ENCODE measurements at regions of chr6 and their contacts with region 1.

Region 1: GRCh38 chr6:118565311-118565960 is 17.3 kb downstream of the PLN start:
- DNase-seq: peak; percentile 49 to 71 (median 58)
- H3K4me3 ChIP-seq: no peak overlapping the region
- H3K4me3 Mint-ChIP-seq: peak overlapping the region in 1 of 8 donors; percentile 58
- H3K27ac ChIP-seq: no peak overlapping the region
- H3K27ac Mint-ChIP-seq: peak overlapping the region; percentile 7 to 86 (median 64)
- H3K4me1 ChIP-seq: peaks cover 12% of the 10 kb centered on the region
- H3K4me1 Mint-ChIP-seq: peaks cover 20 to 46% (median 27%) of the 10 kb centered on the region in 4 donors
- H3K27me3 ChIP-seq: no peaks in the 10 kb centered on the region
- H3K27me3 Mint-ChIP-seq: no peaks in the 10 kb centered on the region

Region 2: GRCh38 chr6:118283766-118284165 is 281.7 kb before region 1 on chr6:
- CTCF ChIA-PET with region 1: interaction called, 6 read pairs
- POLR2A ChIA-PET with region 1: no interaction called
- intact Hi-C with region 1: loop called (anchors 5 kb)
- DNase-seq: peak; percentile 48 to 60 (median 56)
- H3K4me3 ChIP-seq: no peak overlapping the region
- H3K4me3 Mint-ChIP-seq: no peak overlapping the region
- H3K27ac ChIP-seq: no peak overlapping the region
- H3K27ac Mint-ChIP-seq: no peak overlapping the region
- H3K4me1 ChIP-seq: peaks cover 3% of the 10 kb centered on the region
- H3K4me1 Mint-ChIP-seq: peaks cover 0 to 1% (median 0%) of the 10 kb centered on the region in 4 donors
- H3K27me3 ChIP-seq: no peaks in the 10 kb centered on the region
- H3K27me3 Mint-ChIP-seq: peaks cover 5 to 7% of the 10 kb centered on the region in 2 donors

Region 3: DNA sequence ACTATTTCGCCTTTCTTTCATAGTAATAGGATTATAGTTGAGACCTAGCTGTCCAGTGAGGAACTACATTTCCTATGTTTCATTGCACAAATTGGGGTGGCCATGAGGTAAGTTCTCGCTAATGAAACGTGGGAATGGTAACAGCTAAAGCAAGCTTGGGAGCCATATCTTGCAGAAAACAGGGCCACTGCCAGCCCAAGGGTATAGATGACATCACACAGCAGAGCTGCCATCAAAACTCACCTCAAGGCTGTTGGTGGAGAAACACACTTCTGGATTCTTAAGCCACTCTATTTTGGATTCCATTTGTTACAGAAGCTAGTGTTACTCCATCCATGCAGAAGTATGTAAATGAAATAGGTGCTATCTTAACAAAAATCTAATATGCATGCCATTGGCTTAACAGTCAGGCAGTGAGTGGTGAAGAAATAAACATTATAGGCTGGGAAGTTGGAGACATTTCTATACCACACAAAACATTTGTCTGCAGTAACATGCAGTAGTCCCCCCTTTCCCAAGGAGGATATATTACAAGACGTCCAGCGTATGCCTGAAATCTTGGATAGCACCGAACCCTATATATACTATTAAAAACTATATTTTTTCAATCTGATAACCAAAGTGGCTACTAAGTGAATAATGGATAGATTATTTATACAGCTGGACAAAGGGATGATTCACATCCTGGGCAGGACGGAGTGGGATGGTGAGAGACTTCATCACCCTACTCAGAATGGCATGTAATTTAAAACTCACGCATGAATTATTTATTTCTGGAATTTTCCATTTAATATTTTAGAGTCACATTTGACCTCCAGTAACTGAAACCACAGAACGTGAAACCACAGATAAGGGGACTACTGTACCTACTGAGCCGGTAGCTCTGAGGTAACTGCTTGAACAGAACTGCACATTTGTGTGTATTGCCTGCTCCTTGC is 177.4 kb before region 1 on chr6:
- CTCF ChIA-PET with region 1: no interaction called
- POLR2A ChIA-PET with region 1: no interaction called
- intact Hi-C with region 1: no loop called
- DNase-seq: no peak
- H3K4me3 ChIP-seq: no peak overlapping the region
- H3K4me3 Mint-ChIP-seq: no peak overlapping the region
- H3K27ac ChIP-seq: no peak overlapping the region
- H3K27ac Mint-ChIP-seq: no peak overlapping the region
- H3K4me1 ChIP-seq: no peaks in the 10 kb centered on the region
- H3K4me1 Mint-ChIP-seq: peaks cover 0 to 2% (median 0%) of the 10 kb centered on the region in 4 donors
- H3K27me3 ChIP-seq: no peaks in the 10 kb centered on the region
- H3K27me3 Mint-ChIP-seq: no peaks in the 10 kb centered on the region

Region 4: GRCh38 chr6:118495485-118496280 is 69.8 kb before region 1 on chr6:
- CTCF ChIA-PET with region 1: no interaction called
- POLR2A ChIA-PET with region 1: no interaction called
- intact Hi-C with region 1: no loop called
- DNase-seq: no peak
- H3K4me3 ChIP-seq: no peak overlapping the region
- H3K4me3 Mint-ChIP-seq: no peak overlapping the region
- H3K27ac ChIP-seq: no peak overlapping the region
- H3K27ac Mint-ChIP-seq: no peak overlapping the region
- H3K4me1 ChIP-seq: no peaks in the 10 kb centered on the region
- H3K4me1 Mint-ChIP-seq: peaks cover 8 to 14% (median 11%) of the 10 kb centered on the region in 4 donors
- H3K27me3 ChIP-seq: no peaks in the 10 kb centered on the region
- H3K27me3 Mint-ChIP-seq: no peaks in the 10 kb centered on the region

Region 5: DNA sequence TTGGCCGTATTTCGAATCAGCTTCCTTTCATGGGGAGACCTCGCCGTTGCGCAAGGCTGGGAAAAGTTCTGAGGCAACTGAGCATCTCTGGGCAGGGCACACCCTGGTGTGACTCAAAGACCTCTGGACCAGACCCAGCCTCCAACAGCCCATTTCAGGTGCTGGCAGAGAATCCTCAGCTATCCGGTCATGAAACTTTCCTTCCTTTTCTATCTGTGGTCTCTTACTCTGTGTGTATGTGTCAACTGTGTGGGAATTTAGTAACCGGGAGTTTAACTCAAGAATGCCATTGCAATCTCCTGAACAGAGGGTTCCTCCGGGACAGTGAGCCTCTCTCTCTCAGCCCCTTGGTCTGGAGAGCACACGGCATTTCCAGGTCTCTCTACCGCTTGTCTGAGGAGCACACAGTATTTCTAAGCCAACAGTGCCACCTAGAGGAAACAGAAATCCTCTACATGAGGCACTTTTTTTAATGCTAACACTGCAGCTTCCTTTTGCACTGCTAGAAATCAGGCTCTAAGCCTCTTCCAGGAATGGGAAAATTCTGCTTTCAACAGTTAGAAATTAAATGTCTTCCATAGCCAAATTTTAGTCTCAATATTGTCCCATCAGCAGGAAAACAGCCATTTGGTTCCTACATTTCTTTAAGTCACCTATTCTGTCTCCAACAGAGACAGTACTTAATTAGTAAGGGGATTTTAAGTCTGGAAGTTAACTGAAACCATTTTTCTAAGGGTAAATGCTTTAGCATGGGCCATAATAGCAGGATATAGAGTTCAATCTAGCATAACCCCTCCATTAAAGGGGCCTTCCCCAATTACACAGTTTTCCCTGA is 15.4 kb after region 1 on chr6:
- CTCF ChIA-PET with region 1: interaction called, 28 read pairs
- POLR2A ChIA-PET with region 1: interaction called, 4 read pairs
- intact Hi-C with region 1: no loop called
- DNase-seq: peak in 4 of 5 donors; percentile 18 to 43 (median 40)
- H3K4me3 ChIP-seq: no peak overlapping the region
- H3K4me3 Mint-ChIP-seq: peak overlapping the region in 1 of 8 donors; percentile 21
- H3K27ac ChIP-seq: no peak overlapping the region
- H3K27ac Mint-ChIP-seq: peak overlapping the region; percentile 30 to 91 (median 76)
- H3K4me1 ChIP-seq: no peaks in the 10 kb centered on the region
- H3K4me1 Mint-ChIP-seq: peaks cover 7 to 20% (median 12%) of the 10 kb centered on the region in 4 donors
- H3K27me3 ChIP-seq: no peaks in the 10 kb centered on the region
- H3K27me3 Mint-ChIP-seq: no peaks in the 10 kb centered on the region

Region 6: GRCh38 chr6:118724211-118724610 is 158.8 kb after region 1 on chr6:
- CTCF ChIA-PET with region 1: interaction called, 7 read pairs
- POLR2A ChIA-PET with region 1: interaction called, 3 read pairs
- intact Hi-C with region 1: loop called (anchors 1 kb)
- DNase-seq: no peak
- H3K4me3 ChIP-seq: no peak overlapping the region
- H3K4me3 Mint-ChIP-seq: peak overlapping the region in 5 of 8 donors; percentile 7 to 71 (median 59)
- H3K27ac ChIP-seq: no peak overlapping the region
- H3K27ac Mint-ChIP-seq: peak overlapping the region in 4 of 7 donors; percentile 23 to 87 (median 58)
- H3K4me1 ChIP-seq: peaks cover 48% of the 10 kb centered on the region
- H3K4me1 Mint-ChIP-seq: peaks cover 30 to 79% (median 46%) of the 10 kb centered on the region in 4 donors
- H3K27me3 ChIP-seq: no peaks in the 10 kb centered on the region
- H3K27me3 Mint-ChIP-seq: no peaks in the 10 kb centered on the region

Region 7: DNA sequence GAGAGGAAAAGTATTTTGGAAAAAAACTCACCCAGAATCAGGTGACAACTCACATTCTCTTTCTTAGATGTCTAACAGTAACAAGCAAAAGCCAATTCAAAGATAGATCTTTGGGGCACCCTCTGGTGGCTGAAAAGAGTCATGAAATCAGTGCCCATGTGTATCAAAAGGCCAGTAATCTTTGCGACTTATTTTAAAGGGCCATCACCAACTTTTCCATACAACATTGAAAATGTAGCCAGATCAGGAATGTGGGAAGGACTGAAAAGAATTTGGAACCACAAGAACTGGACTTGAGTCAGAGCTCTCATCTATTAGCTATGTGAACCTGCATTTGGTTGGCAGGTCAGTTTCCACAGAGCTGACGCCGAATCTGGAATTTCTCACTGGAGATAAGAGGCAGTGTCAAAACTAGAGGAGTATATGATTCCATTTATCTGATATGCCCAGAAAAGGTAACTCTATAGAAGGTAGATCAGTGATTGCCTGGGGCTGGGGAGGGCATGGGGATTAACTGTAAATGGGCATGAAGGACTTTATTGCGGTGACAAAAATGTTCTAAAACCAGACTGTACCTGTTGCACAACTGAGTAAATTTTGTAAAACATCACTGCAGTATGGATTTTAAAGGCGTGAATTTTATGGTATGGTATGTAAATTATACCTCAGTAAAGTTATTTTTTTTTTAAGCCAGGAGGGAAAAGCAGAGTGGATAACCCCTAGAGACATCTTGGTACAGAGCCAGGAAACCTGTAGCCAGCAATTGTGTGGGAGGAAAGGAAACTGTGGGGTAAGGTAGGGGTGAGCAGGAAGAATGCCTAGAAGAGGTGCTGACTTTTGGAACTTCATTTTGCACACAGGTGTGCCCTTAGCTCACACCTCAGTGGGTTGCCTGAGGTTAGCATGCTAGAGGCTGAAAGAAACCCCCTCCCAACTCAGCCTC is 211.4 kb after region 1 on chr6:
- CTCF ChIA-PET with region 1: interaction called, 50 read pairs
- POLR2A ChIA-PET with region 1: interaction called, 3 read pairs
- intact Hi-C with region 1: loop called (anchors 1 kb)
- DNase-seq: peak; percentile 63 to 73 (median 71)
- H3K4me3 ChIP-seq: no peak overlapping the region
- H3K4me3 Mint-ChIP-seq: peak overlapping the region in 6 of 8 donors; percentile 2 to 71 (median 50)
- H3K27ac ChIP-seq: no peak overlapping the region
- H3K27ac Mint-ChIP-seq: peak overlapping the region; percentile 16 to 90 (median 74)
- H3K4me1 ChIP-seq: peaks cover 21% of the 10 kb centered on the region
- H3K4me1 Mint-ChIP-seq: peaks cover 17 to 26% (median 21%) of the 10 kb centered on the region in 4 donors
- H3K27me3 ChIP-seq: no peaks in the 10 kb centered on the region
- H3K27me3 Mint-ChIP-seq: no peaks in the 10 kb centered on the region

Region 8: DNA sequence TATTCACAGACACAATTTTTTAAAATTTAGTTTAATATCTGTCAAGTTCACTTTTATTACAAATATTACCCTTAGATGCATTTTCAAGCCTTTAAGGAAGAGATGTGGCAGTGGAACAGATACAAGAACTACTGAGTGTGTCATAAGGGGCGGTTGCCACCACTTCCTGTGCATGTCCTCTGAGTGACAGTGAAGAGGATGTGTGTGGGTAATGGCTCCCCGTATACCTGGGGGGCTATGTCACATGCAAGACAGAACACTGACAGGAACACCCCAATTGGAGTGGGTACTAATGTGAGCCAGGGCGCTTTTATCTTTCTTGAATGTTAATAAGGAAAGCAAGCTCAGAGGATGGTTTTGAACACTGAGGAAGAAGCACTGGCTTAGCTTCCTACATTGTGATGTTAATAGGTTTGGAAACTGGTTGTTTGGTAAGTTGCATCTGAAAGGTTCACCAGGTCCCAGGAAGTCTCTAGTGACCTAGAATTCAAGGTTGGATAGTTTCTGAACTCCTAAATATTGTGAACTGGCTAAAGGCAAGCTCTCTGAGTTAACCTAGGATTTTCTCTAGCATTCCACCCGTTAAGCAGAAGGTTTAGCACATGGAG is 245.1 kb after region 1 on chr6:
- CTCF ChIA-PET with region 1: interaction called, 18 read pairs
- POLR2A ChIA-PET with region 1: no interaction called
- intact Hi-C with region 1: no loop called
- DNase-seq: peak; percentile 74 to 89 (median 84)
- H3K4me3 ChIP-seq: peak overlapping the region in 1 of 2 donors; percentile 12
- H3K4me3 Mint-ChIP-seq: peak overlapping the region; percentile 62 to 91 (median 82)
- H3K27ac ChIP-seq: peak overlapping the region; percentile 49
- H3K27ac Mint-ChIP-seq: peak overlapping the region; percentile 87 to 99 (median 96)
- H3K4me1 ChIP-seq: peaks cover 47% of the 10 kb centered on the region
- H3K4me1 Mint-ChIP-seq: peaks cover 46 to 77% (median 51%) of the 10 kb centered on the region in 4 donors
- H3K27me3 ChIP-seq: no peaks in the 10 kb centered on the region
- H3K27me3 Mint-ChIP-seq: no peaks in the 10 kb centered on the region